A673 (cell line): ENCODE measurements at regions of chr5 and their contacts with region 1.

Region 1: GRCh38 chr5:158174918-158175851 is 316.2 kb upstream of the CLINT1 start:
- DNase-seq: peak; percentile 61
- H3K4me3 ChIP-seq: no peak overlapping the region
- H3K27ac ChIP-seq: no peak overlapping the region
- H3K4me1 ChIP-seq: no peaks in the 10 kb centered on the region
- H3K27me3 ChIP-seq: no peaks in the 10 kb centered on the region
- CTCF ChIP-seq: peak; percentile 71

Region 2: GRCh38 chr5:156735477-156735876 is 1439.7 kb before region 1 on chr5:
- CTCF ChIA-PET with region 1: no interaction called
- POLR2A ChIA-PET with region 1: no interaction called
- intact Hi-C with region 1: no loop called
- DNase-seq: no peak
- H3K4me3 ChIP-seq: no peak overlapping the region
- H3K27ac ChIP-seq: no peak overlapping the region
- H3K4me1 ChIP-seq: no peaks in the 10 kb centered on the region
- H3K27me3 ChIP-seq: no peaks in the 10 kb centered on the region
- CTCF ChIP-seq: no peak

Region 3: GRCh38 chr5:157816682-157817386 is 358.4 kb before region 1 on chr5:
- CTCF ChIA-PET with region 1: no interaction called
- POLR2A ChIA-PET with region 1: no interaction called
- intact Hi-C with region 1: loop called (anchors 10 kb)
- DNase-seq: peak; percentile 32
- H3K4me3 ChIP-seq: no peak overlapping the region
- H3K27ac ChIP-seq: no peak overlapping the region
- H3K4me1 ChIP-seq: peaks cover 29% of the 10 kb centered on the region
- H3K27me3 ChIP-seq: no peaks in the 10 kb centered on the region
- CTCF ChIP-seq: peak; percentile 61

Region 4: GRCh38 chr5:158695595-158696330 is 520.6 kb after region 1 on chr5:
- CTCF ChIA-PET with region 1: interaction called, 4 read pairs
- POLR2A ChIA-PET with region 1: no interaction called
- intact Hi-C with region 1: loop called (anchors 2 kb)
- DNase-seq: peak; percentile 81
- H3K4me3 ChIP-seq: no peak overlapping the region
- H3K27ac ChIP-seq: no peak overlapping the region
- H3K4me1 ChIP-seq: no peaks in the 10 kb centered on the region
- H3K27me3 ChIP-seq: no peaks in the 10 kb centered on the region
- CTCF ChIP-seq: peak; percentile 94

Region 5: GRCh38 chr5:158718738-158719505 is 543.7 kb after region 1 on chr5:
- CTCF ChIA-PET with region 1: interaction called, 11 read pairs
- POLR2A ChIA-PET with region 1: no interaction called
- intact Hi-C with region 1: no loop called
- DNase-seq: no peak
- H3K4me3 ChIP-seq: no peak overlapping the region
- H3K27ac ChIP-seq: no peak overlapping the region
- H3K4me1 ChIP-seq: no peaks in the 10 kb centered on the region
- H3K27me3 ChIP-seq: no peaks in the 10 kb centered on the region
- CTCF ChIP-seq: no peak

Region 6: GRCh38 chr5:158898185-158899177 is 723.3 kb after region 1 on chr5:
- CTCF ChIA-PET with region 1: no interaction called
- POLR2A ChIA-PET with region 1: no interaction called
- intact Hi-C with region 1: no loop called
- DNase-seq: no peak
- H3K4me3 ChIP-seq: no peak overlapping the region
- H3K27ac ChIP-seq: no peak overlapping the region
- H3K4me1 ChIP-seq: no peaks in the 10 kb centered on the region
- H3K27me3 ChIP-seq: no peaks in the 10 kb centered on the region
- CTCF ChIP-seq: no peak

Region 7: GRCh38 chr5:159106569-159107282 is 931.5 kb after region 1 on chr5:
- CTCF ChIA-PET with region 1: interaction called, 16 read pairs
- POLR2A ChIA-PET with region 1: no interaction called
- intact Hi-C with region 1: loop called (anchors 2 kb)
- DNase-seq: peak; percentile 73
- H3K4me3 ChIP-seq: peak overlapping the region; percentile 34
- H3K27ac ChIP-seq: no peak overlapping the region
- H3K4me1 ChIP-seq: no peaks in the 10 kb centered on the region
- H3K27me3 ChIP-seq: peaks cover 16% of the 10 kb centered on the region
- CTCF ChIP-seq: peak; percentile 89

Region 8: GRCh38 chr5:159112436-159112835 is 937.3 kb after region 1 on chr5:
- CTCF ChIA-PET with region 1: interaction called, 16 read pairs
- POLR2A ChIA-PET with region 1: no interaction called
- intact Hi-C with region 1: loop called (anchors 2 kb)
- DNase-seq: no peak
- H3K4me3 ChIP-seq: no peak overlapping the region
- H3K27ac ChIP-seq: no peak overlapping the region
- H3K4me1 ChIP-seq: no peaks in the 10 kb centered on the region
- H3K27me3 ChIP-seq: peaks cover 12% of the 10 kb centered on the region
- CTCF ChIP-seq: no peak

Region 9: DNA sequence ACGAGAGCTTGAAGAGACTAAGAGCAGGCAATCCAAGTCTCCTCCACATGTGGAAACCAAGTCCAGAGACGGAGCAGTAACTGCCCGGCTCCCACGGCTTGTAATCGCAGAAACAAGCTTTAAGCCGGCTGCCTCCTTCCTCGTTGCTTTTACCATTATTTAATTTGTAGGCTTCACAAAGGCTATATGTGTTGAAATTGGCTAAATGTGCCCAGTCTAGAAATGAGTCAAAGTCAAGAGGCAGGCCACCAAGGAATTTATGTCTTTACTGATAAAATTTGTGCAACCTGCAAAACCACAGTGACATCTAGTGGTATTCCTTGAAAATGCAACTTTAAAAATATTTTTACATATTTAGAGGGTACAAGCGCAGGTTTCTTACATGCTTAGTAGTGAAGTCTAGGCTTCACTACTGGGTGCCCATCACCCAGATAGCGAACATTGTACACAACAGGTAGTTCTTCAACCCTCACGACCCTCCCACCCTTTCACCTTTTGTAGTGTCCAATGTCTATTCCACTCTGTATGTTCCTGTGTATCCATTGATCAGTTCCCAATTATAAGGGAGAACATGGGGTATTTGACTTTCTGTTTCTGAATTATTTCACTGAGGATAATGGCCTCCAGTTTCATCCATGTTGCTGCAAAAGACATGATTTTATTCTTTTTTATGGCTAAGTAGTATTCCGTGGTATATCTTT is 958.0 kb after region 1 on chr5:
- CTCF ChIA-PET with region 1: no interaction called
- POLR2A ChIA-PET with region 1: no interaction called
- intact Hi-C with region 1: loop called (anchors 5 kb)
- DNase-seq: peak; percentile 60
- H3K4me3 ChIP-seq: no peak overlapping the region
- H3K27ac ChIP-seq: no peak overlapping the region
- H3K4me1 ChIP-seq: no peaks in the 10 kb centered on the region
- H3K27me3 ChIP-seq: no peaks in the 10 kb centered on the region
- CTCF ChIP-seq: peak; percentile 67